ENCODE measurements at regions of chr7 and their contacts with region 1.

Region 1: DNA sequence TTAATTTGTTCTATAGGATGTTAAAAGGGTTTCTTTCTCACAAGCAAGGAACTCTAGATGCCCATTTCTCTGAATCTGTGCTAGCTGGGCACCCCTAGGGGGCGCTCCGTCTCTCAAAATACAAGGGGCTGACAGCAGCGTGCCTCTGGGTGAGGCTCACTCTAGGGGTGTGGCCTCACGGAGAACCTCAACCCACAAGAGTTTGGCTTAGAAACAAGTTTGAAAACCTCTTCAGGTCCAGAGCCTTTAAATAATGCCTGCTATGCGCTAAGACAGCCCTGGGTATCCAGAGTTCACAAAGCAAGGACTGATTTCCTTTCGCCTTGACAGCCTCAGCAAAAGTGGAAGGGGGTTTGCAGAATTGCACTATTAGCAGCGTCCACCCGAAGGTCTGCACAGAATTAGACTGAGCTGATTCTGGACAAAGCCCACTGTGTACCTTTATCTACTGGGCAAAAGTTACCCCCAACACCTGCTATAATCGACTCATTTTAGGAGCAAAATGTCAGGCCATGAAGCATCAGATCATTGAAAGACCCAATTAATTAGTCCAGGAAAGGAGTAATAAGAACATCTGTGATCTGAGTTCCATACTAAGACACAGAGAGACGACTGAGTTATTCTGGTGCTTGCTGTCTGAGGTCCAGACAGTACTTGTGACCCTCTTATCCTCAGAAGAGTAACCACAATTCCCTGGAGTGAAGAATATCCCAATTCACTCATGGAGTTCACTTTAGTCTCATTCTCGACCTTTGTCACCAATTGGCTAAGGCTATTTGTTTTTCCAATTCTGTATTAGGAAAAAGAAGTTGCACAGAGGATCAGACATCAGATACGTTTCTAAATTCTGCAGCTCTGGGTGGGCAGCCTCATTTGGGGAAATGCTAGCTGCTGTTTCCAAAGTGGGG is 574 bp upstream of the CPED1 start:
- DNase-seq: peak; percentile 89
- ATAC-seq: peak; percentile 95
- H3K4me3 ChIP-seq: peak overlapping the region; percentile 29 to 77 (median 49)
- H3K4me3 Mint-ChIP-seq: peak overlapping the region; percentile 95
- H3K27ac ChIP-seq: no peak overlapping the region
- H3K27ac Mint-ChIP-seq: no peak overlapping the region
- H3K4me1 ChIP-seq: peaks cover 24% of the 10 kb centered on the region in 2 donors
- H3K4me1 Mint-ChIP-seq: peaks cover 23% of the 10 kb centered on the region
- H3K27me3 ChIP-seq: peaks cover 0 to 20% (median 18%) of the 10 kb centered on the region in 4 experiments
- H3K27me3 Mint-ChIP-seq: peaks cover 44% of the 10 kb centered on the region
- CTCF ChIP-seq: peak; percentile 98

Region 2: GRCh38 chr7:119999738-120000475 is 988.0 kb before region 1 on chr7:
- CTCF ChIA-PET with region 1: no interaction called
- POLR2A ChIA-PET with region 1: no interaction called
- intact Hi-C with region 1: no loop called
- DNase-seq: no peak
- ATAC-seq: no peak
- H3K4me3 ChIP-seq: no peak overlapping the region
- H3K4me3 Mint-ChIP-seq: no peak overlapping the region
- H3K27ac ChIP-seq: no peak overlapping the region
- H3K27ac Mint-ChIP-seq: no peak overlapping the region
- H3K4me1 ChIP-seq: no peaks in the 10 kb centered on the region
- H3K4me1 Mint-ChIP-seq: no peaks in the 10 kb centered on the region
- H3K27me3 ChIP-seq: no peaks in the 10 kb centered on the region
- H3K27me3 Mint-ChIP-seq: no peaks in the 10 kb centered on the region
- CTCF ChIP-seq: no peak

Region 3: GRCh38 chr7:120280743-120281142 is 707.2 kb before region 1 on chr7:
- CTCF ChIA-PET with region 1: no interaction called
- POLR2A ChIA-PET with region 1: no interaction called
- intact Hi-C with region 1: no loop called
- DNase-seq: no peak
- ATAC-seq: no peak
- H3K4me3 ChIP-seq: no peak overlapping the region
- H3K4me3 Mint-ChIP-seq: no peak overlapping the region
- H3K27ac ChIP-seq: no peak overlapping the region
- H3K27ac Mint-ChIP-seq: no peak overlapping the region
- H3K4me1 ChIP-seq: no peaks in the 10 kb centered on the region
- H3K4me1 Mint-ChIP-seq: no peaks in the 10 kb centered on the region
- H3K27me3 ChIP-seq: no peaks in the 10 kb centered on the region
- H3K27me3 Mint-ChIP-seq: no peaks in the 10 kb centered on the region
- CTCF ChIP-seq: no peak

Region 4: DNA sequence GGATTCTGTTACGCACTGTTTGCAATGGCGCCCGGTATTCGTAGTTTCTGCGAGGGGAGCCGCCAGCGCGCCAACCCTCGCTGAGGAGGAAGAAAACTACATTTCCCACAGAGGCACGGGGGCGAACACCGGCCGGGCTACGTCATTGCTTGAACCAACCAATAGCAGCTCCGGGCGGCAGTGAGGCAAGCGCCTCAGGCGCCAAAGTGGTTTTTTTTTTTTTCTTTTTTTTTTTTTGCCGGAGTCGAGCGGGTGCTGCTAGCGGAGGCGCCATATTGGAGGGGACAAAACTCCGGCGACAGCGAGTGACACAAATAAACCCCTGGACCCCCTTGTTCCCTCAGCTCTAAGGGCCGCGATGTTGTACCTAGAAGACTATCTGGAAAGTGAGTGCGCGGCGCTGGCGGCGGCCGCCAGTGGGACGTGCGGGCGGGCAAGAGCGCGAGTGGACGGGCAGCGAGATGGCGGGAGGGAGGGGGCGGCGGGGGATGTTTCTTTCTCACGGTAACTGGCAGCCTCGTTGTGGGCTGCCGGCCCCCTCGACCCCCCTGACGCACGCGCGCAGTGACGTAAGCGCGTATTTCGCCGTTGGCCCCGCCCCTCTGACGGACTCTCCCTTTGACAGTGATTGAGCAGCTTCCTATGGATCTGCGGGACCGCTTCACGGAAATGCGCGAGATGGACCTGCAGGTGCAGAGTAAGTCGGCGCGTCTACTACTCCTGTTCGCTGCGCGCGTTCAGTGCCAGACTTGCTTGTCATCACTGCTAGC is 37.2 kb before region 1 on chr7 and contains the start of gene ING3:
- CTCF ChIA-PET with region 1: interaction called, 8 read pairs
- POLR2A ChIA-PET with region 1: interaction called, 3 read pairs
- intact Hi-C with region 1: loop called (anchors 1 kb)
- DNase-seq: peak; percentile 99
- ATAC-seq: peak; percentile 91
- H3K4me3 ChIP-seq: peak within 1 kb of the TSS; percentile 71 to 99 (median 83)
- H3K4me3 Mint-ChIP-seq: peak within 1 kb of the TSS; percentile 99
- H3K27ac ChIP-seq: peak within 1 kb of the TSS; percentile 95 to 96
- H3K27ac Mint-ChIP-seq: peak within 1 kb of the TSS; percentile 99
- H3K4me1 ChIP-seq: peaks cover 14 to 15% of the 10 kb centered on the region in 2 donors
- H3K4me1 Mint-ChIP-seq: peaks cover 20% of the 10 kb centered on the region
- H3K27me3 ChIP-seq: no peaks in the 10 kb centered on the region
- H3K27me3 Mint-ChIP-seq: peaks cover 3% of the 10 kb centered on the region
- CTCF ChIP-seq: no peak
- total RNA-seq, gene ING3: 38.0 and 41.7 TPM in 2 replicates

Region 5: GRCh38 chr7:120997882-120998474 is 10.0 kb after region 1 on chr7:
- CTCF ChIA-PET with region 1: interaction called, 19 read pairs
- POLR2A ChIA-PET with region 1: no interaction called
- intact Hi-C with region 1: no loop called
- DNase-seq: no peak
- ATAC-seq: no peak
- H3K4me3 ChIP-seq: no peak overlapping the region
- H3K4me3 Mint-ChIP-seq: no peak overlapping the region
- H3K27ac ChIP-seq: no peak overlapping the region
- H3K27ac Mint-ChIP-seq: no peak overlapping the region
- H3K4me1 ChIP-seq: peaks cover 14 to 19% of the 10 kb centered on the region in 2 donors
- H3K4me1 Mint-ChIP-seq: peaks cover 14% of the 10 kb centered on the region
- H3K27me3 ChIP-seq: peaks cover 0 to 1% (median 0%) of the 10 kb centered on the region in 4 experiments
- H3K27me3 Mint-ChIP-seq: peaks cover 30% of the 10 kb centered on the region
- CTCF ChIP-seq: no peak

Region 6: DNA sequence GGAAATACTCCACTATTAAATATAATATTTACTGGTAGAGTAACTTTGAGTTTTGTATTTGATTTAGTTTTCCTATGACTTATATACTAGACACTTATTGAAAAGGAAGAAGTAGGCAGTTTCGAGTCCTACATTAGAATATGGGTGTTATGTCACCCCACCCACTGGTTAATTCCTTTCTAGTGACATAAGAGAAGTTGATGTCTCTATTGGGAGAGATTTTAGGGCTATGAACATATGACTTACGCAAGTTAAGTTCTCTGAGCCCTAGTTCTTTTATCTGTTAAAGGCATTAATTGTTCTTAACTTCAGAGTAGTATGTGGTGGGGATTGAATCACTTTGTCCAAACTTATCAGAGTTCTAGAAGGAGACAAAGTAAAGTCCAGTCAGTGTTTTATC is 31.1 kb after region 1 on chr7:
- CTCF ChIA-PET with region 1: no interaction called
- POLR2A ChIA-PET with region 1: no interaction called
- intact Hi-C with region 1: no loop called
- DNase-seq: no peak
- ATAC-seq: no peak
- H3K4me3 ChIP-seq: no peak overlapping the region
- H3K4me3 Mint-ChIP-seq: no peak overlapping the region
- H3K27ac ChIP-seq: no peak overlapping the region
- H3K27ac Mint-ChIP-seq: no peak overlapping the region
- H3K4me1 ChIP-seq: no peaks in the 10 kb centered on the region
- H3K4me1 Mint-ChIP-seq: no peaks in the 10 kb centered on the region
- H3K27me3 ChIP-seq: no peaks in the 10 kb centered on the region
- H3K27me3 Mint-ChIP-seq: peaks cover 1% of the 10 kb centered on the region
- CTCF ChIP-seq: no peak

Region 7: GRCh38 chr7:121081327-121081936 is 93.5 kb after region 1 on chr7:
- CTCF ChIA-PET with region 1: interaction called, 85 read pairs
- POLR2A ChIA-PET with region 1: no interaction called
- intact Hi-C with region 1: loop called (anchors 1 kb)
- DNase-seq: peak; percentile 62
- ATAC-seq: peak; percentile 76
- H3K4me3 ChIP-seq: no peak overlapping the region
- H3K4me3 Mint-ChIP-seq: no peak overlapping the region
- H3K27ac ChIP-seq: no peak overlapping the region
- H3K27ac Mint-ChIP-seq: no peak overlapping the region
- H3K4me1 ChIP-seq: peaks cover 2 to 9% of the 10 kb centered on the region in 2 donors
- H3K4me1 Mint-ChIP-seq: peaks cover 12% of the 10 kb centered on the region
- H3K27me3 ChIP-seq: no peaks in the 10 kb centered on the region
- H3K27me3 Mint-ChIP-seq: no peaks in the 10 kb centered on the region
- CTCF ChIP-seq: peak; percentile 80

Region 8: DNA sequence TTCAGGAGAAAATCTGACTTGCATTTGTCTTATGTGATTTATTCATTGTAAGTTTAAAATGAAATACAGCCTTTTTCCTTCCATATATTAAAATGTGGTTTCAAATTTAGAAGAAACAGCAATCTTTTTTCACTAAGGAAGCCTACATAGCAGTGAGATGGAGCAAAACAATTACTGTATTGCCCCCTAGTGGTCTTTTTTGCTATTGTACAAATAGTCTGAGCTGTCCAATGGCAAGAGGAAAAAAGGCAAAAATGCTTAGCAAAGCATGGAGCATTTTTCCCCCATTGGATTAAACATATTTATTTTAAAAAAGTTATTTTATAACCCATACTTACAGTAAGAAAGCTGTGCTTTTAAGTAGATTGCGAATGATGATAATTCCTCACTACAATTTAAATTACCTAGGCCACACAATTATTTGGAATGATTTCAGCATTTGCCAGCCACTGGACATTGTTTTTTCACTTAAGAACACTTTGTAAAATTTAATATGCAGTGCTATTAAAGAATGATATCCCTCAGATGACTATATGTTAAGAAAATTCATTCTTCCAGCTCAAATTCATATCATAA is 120.1 kb after region 1 on chr7:
- CTCF ChIA-PET with region 1: interaction called, 38 read pairs
- POLR2A ChIA-PET with region 1: no interaction called
- intact Hi-C with region 1: loop called (anchors 1 kb)
- DNase-seq: peak; percentile 67
- ATAC-seq: peak; percentile 78
- H3K4me3 ChIP-seq: no peak overlapping the region
- H3K4me3 Mint-ChIP-seq: no peak overlapping the region
- H3K27ac ChIP-seq: no peak overlapping the region
- H3K27ac Mint-ChIP-seq: no peak overlapping the region
- H3K4me1 ChIP-seq: no peaks in the 10 kb centered on the region
- H3K4me1 Mint-ChIP-seq: no peaks in the 10 kb centered on the region
- H3K27me3 ChIP-seq: no peaks in the 10 kb centered on the region
- H3K27me3 Mint-ChIP-seq: no peaks in the 10 kb centered on the region
- CTCF ChIP-seq: peak; percentile 98

Region 9: DNA sequence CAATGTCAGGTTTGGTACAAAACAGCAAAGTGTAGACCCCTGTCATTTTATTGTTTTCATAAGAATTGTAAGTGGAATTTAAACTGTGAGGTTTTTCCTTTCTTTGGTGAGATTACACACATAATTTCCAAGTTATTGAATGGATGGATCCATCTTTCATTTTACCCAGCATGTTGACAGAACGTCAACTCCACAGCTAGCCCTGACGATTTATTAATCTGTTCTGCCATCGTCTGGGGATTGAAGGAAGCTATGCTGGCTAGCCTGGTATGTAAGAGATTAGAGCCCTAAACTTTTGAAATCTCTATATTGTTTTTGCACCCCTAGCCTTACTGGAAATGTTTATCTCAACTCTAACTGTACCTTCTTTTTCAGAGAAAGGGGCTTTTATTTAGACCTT is 349.5 kb after region 1 on chr7:
- CTCF ChIA-PET with region 1: interaction called, 3 read pairs
- POLR2A ChIA-PET with region 1: no interaction called
- intact Hi-C with region 1: loop called (anchors 2 kb)
- DNase-seq: peak; percentile 50
- ATAC-seq: peak; percentile 65
- H3K4me3 ChIP-seq: no peak overlapping the region
- H3K4me3 Mint-ChIP-seq: no peak overlapping the region
- H3K27ac ChIP-seq: peak overlapping the region in 1 of 2 donors; percentile 24
- H3K27ac Mint-ChIP-seq: peak overlapping the region; percentile 46
- H3K4me1 ChIP-seq: no peaks in the 10 kb centered on the region
- H3K4me1 Mint-ChIP-seq: peaks cover 18% of the 10 kb centered on the region
- H3K27me3 ChIP-seq: no peaks in the 10 kb centered on the region
- H3K27me3 Mint-ChIP-seq: no peaks in the 10 kb centered on the region
- CTCF ChIP-seq: peak; percentile 35

Region 10: DNA sequence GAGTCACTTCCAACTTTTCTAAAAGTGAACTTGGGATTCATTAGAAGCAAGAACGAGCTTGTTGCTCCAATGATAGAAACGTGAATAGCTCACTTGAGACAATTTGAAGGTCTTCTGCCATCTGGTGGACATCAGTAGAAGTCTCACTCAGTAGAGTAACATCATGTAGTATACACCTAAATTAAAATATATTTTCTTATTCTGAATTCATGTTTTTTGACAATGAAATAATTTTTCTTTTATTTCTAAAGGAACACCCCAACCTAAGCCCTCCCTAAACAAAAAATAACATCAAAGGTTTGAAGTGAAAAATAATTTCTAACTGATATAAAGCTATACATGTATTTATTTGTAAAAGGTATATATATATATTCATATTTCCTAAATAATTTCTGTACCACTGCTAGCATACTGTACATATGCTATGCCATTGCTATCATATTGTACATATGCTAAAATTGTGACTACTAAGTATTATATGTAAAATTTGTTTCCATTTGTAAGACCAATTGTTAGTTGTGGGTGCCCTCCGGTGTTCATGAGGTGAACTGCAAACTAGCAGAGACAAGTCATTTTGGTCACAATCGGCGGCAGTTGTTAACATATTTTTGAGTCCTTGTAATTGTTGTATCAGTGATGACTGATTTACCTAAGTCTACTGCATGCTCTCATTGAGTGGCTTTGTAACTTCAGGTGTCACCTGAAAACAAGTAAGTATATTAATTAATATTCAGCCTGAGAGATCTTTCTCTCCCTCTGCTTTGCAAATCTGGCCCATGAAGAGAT is 1006.9 kb after region 1 on chr7:
- CTCF ChIA-PET with region 1: interaction called, 6 read pairs
- POLR2A ChIA-PET with region 1: no interaction called
- intact Hi-C with region 1: loop called (anchors 2 kb)
- DNase-seq: peak; percentile 53
- ATAC-seq: peak; percentile 74
- H3K4me3 ChIP-seq: no peak overlapping the region
- H3K4me3 Mint-ChIP-seq: no peak overlapping the region
- H3K27ac ChIP-seq: no peak overlapping the region
- H3K27ac Mint-ChIP-seq: no peak overlapping the region
- H3K4me1 ChIP-seq: no peaks in the 10 kb centered on the region
- H3K4me1 Mint-ChIP-seq: no peaks in the 10 kb centered on the region
- H3K27me3 ChIP-seq: no peaks in the 10 kb centered on the region
- H3K27me3 Mint-ChIP-seq: peaks cover 3% of the 10 kb centered on the region
- CTCF ChIP-seq: peak; percentile 91